ENCODE measurements at regions of chr20 and their contacts with region 1.

Region 1: DNA sequence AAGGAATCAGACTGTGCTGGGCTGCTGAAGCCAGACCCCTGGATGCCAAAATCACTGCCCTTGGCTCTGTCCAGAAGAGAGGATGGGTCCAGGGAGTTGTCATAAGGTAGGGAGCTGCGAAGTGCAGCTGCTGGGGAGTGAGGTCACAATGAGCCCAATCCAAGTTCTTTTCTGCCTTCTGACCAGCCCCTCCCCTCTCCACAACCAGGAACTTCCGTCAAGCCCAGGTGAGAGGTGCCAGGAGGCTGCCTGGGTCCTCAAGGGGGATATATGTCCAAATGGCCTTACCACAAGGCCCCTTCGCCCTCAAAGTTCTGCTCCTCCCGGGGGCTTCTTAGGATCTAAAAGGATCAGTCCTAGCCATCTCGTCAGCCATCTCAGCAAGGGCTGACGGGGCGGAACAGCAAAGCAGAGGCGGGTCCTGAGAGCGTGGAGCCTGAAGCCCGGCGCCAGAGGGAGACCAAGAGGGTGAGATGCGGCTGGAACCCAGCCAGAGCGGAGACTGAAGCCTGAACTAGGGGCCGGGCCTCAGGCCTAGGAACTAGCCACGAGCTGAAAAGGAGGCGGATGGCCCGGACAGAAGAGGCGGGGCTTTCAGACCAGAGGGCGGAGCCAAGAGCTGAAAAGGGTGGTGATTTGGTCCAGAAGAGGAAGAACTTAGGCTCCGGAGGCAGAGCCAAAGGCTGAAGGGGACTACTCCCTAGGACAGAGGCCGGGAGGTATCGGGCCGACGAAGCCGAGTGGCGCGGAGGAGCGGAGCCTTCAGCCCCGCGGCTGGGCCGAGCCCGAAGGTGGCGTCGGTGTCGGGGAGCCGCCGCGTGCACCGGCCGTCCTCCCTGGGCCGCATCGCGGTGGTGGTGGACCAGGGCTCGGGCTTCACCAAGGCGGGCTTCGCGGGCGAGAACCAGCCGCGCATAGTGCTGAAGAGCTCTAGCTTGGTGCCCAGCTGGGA is at the start of gene ACTL10:
- DNase-seq: peak; percentile 95
- H3K4me3 ChIP-seq: peak within 1 kb of the TSS; percentile 61
- H3K27ac ChIP-seq: peak within 1 kb of the TSS; percentile 62
- H3K27me3 ChIP-seq: no peaks in the 10 kb centered on the region
- CTCF ChIP-seq: peak; percentile 52
- polyA plus RNA-seq, gene ACTL10: 0.31 and 0.41 TPM in 2 replicates

Region 2: DNA sequence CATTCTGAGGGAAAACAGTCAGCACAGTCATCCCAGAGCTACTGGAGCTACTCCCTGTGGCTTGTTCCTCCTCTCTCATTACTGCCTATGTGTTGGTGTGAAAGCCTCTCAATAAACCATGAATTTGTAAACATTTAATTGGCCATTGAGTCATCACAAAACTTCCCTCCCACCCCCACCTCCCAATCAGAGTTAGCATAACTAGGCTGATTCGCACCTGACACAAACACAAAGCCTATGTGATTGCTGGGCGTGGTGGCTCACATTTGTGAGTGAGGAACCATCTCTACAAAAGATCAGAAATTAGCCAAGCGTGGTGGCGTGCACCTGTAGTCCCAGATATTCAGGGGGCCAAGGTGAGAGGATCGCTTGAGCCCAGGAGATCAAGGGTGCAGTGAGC is 205.9 kb before region 1 on chr20:
- CTCF ChIA-PET with region 1: interaction called, 15 read pairs
- POLR2A ChIA-PET with region 1: no interaction called
- DNase-seq: no peak
- H3K4me3 ChIP-seq: no peak overlapping the region
- H3K27ac ChIP-seq: no peak overlapping the region
- H3K27me3 ChIP-seq: no peaks in the 10 kb centered on the region
- CTCF ChIP-seq: no peak

Region 3: GRCh38 chr20:33489495-33490022 is 177.0 kb before region 1 on chr20:
- CTCF ChIA-PET with region 1: no interaction called
- POLR2A ChIA-PET with region 1: interaction called, 10 read pairs
- DNase-seq: peak; percentile 88
- H3K4me3 ChIP-seq: peak overlapping the region; percentile 67
- H3K27ac ChIP-seq: peak overlapping the region; percentile 89
- H3K27me3 ChIP-seq: no peaks in the 10 kb centered on the region
- CTCF ChIP-seq: no peak

Region 4: GRCh38 chr20:33640297-33640696 is 26.3 kb before region 1 on chr20:
- CTCF ChIA-PET with region 1: no interaction called
- POLR2A ChIA-PET with region 1: no interaction called
- DNase-seq: no peak
- H3K4me3 ChIP-seq: no peak overlapping the region
- H3K27ac ChIP-seq: no peak overlapping the region
- H3K27me3 ChIP-seq: no peaks in the 10 kb centered on the region
- CTCF ChIP-seq: no peak